Mammary epithelial cell (primary cell): ENCODE measurements at regions of chr6 and their contacts with region 1.

Region 1: DNA sequence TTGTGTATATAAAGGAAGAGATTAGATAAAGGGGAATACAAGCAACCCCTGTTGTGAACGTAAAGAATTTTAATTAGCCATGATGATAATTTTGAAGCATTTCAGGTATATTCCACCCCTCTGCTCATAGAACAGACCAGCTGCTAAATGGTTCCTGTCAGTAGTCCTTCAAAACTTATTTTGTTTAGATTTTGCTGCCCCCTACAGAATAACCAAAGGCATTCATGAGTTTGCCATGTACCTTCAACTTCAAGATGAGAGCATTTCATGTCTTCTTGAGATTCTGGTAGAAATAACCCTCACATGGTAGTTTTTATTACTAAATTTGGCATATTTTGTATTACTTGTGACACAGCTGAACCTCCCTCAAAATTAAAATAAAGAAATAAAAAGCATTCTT is 1586.7 kb downstream of the HACE1 start:
- DNase-seq: no peak
- H3K4me3 ChIP-seq: no peak overlapping the region
- H3K27ac ChIP-seq: no peak overlapping the region
- H3K4me1 ChIP-seq: no peaks in the 10 kb centered on the region
- H3K27me3 ChIP-seq: no peaks in the 10 kb centered on the region
- CTCF ChIP-seq: peak in 1 of 2 donors; percentile 57

Region 2: GRCh38 chr6:102438171-102438570 is 834.9 kb before region 1 on chr6:
- CTCF ChIA-PET with region 1: no interaction called
- dilution Hi-C with region 1: no loop called
- in situ Hi-C with region 1: no loop called
- intact Hi-C with region 1: no loop called
- DNase-seq: no peak
- H3K4me3 ChIP-seq: no peak overlapping the region
- H3K27ac ChIP-seq: no peak overlapping the region
- H3K4me1 ChIP-seq: no peaks in the 10 kb centered on the region
- H3K27me3 ChIP-seq: no peaks in the 10 kb centered on the region
- CTCF ChIP-seq: no peak

Region 3: GRCh38 chr6:102853269-102853955 is 419.6 kb before region 1 on chr6:
- CTCF ChIA-PET with region 1: no interaction called
- dilution Hi-C with region 1: no loop called
- in situ Hi-C with region 1: no loop called
- intact Hi-C with region 1: loop called (anchors 10 kb)
- DNase-seq: no peak
- H3K4me3 ChIP-seq: no peak overlapping the region
- H3K27ac ChIP-seq: no peak overlapping the region
- H3K4me1 ChIP-seq: no peaks in the 10 kb centered on the region
- H3K27me3 ChIP-seq: no peaks in the 10 kb centered on the region
- CTCF ChIP-seq: no peak